Calu3 (cell line): ENCODE measurements at regions of chr10 and their contacts with region 1.

Region 1: GRCh38 chr10:88565072-88565471 is 18.0 kb downstream of the RNLS start:
- DNase-seq: no peak
- H3K4me3 Mint-ChIP-seq: no peak overlapping the region
- H3K27ac Mint-ChIP-seq: no peak overlapping the region
- H3K4me1 Mint-ChIP-seq: no peaks in the 10 kb centered on the region
- H3K27me3 Mint-ChIP-seq: no peaks in the 10 kb centered on the region
- CTCF ChIP-seq: no peak

Region 2: GRCh38 chr10:88372051-88372715 is 192.9 kb before region 1 on chr10:
- CTCF ChIA-PET with region 1: no interaction called
- intact Hi-C with region 1: no loop called
- DNase-seq: no peak
- H3K4me3 Mint-ChIP-seq: no peak overlapping the region
- H3K27ac Mint-ChIP-seq: no peak overlapping the region
- H3K4me1 Mint-ChIP-seq: no peaks in the 10 kb centered on the region
- H3K27me3 Mint-ChIP-seq: no peaks in the 10 kb centered on the region
- CTCF ChIP-seq: no peak

Region 3: DNA sequence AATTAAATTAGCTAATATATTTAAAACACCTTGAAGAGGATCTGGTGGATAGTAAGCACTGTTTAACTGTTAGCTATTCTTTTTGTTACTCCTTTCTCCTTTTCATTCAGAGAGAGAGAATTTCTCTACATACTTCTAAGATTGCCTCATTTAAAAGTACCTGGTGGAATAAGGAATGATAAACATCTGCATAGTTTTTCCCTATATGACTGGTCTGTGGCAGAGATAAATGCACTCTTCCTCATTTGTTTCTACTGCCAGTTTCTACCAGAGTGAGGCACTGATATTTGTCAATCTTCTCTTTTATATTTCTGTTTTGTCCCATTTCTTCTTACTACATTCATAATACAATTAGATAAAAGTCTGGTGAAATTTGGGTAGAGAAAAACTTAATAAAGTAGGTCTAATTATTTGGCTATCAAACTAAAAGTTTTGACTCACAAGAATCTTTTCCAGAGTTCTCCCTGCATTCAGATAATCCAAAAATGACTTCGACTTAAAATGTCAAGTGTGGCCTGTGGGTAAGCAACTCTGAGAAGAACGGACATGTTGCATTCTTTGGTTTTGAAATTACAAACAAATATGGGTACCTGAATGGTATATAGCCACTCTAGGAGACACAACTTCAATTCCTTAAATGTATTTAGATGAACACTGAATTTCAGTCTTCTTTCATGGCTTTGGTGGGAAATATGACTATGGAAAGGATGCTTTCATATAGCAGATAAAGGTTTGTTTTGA is 20.8 kb before region 1 on chr10:
- CTCF ChIA-PET with region 1: no interaction called
- intact Hi-C with region 1: no loop called
- DNase-seq: no peak
- H3K4me3 Mint-ChIP-seq: no peak overlapping the region
- H3K27ac Mint-ChIP-seq: no peak overlapping the region
- H3K4me1 Mint-ChIP-seq: no peaks in the 10 kb centered on the region
- H3K27me3 Mint-ChIP-seq: no peaks in the 10 kb centered on the region
- CTCF ChIP-seq: no peak

Region 4: GRCh38 chr10:88810196-88810961 is 245.3 kb after region 1 on chr10:
- CTCF ChIA-PET with region 1: interaction called, 3 read pairs
- intact Hi-C with region 1: loop called (anchors 5 kb)
- DNase-seq: peak; percentile 34
- H3K4me3 Mint-ChIP-seq: no peak overlapping the region
- H3K27ac Mint-ChIP-seq: no peak overlapping the region
- H3K4me1 Mint-ChIP-seq: peaks cover 10% of the 10 kb centered on the region
- H3K27me3 Mint-ChIP-seq: no peaks in the 10 kb centered on the region
- CTCF ChIP-seq: peak; percentile 39